Naive thymus-derived CD4-positive, alpha-beta T cell (primary cell): ENCODE measurements at regions of chr2 and their contacts with region 1.

Region 1: DNA sequence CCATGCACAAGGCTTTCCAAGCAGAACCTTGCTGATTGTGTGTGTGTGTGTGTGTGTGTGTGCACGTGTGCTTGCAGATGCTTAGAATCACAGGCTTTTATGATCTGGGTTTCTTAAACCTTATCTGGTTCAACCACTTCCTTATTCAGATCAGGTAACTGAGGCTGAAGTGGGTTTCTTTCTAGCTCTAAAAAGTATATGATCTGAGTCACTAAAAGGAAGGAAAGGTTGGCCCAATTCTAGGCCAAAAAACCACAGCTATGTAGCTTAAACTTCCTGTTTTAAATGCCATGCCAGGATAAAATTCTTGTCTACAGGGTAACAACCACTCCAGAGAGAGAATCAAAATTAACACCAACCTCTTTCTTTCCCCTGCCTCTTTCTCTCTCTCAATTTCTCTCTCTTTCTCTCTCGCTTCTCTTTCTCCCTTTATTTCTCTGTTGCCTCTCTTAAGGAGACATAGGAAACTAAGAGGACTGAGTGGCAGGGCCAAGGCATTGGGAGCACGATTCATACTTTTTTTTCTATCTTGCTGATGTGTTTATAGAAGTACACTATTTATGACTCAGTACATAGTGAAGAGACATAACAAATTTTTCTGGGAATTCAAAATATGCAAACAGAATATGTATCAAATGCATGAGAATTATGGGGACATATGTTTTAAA is 140.3 kb downstream of the TRIB2 start:
- DNase-seq: peak in 7 of 9 donors; percentile 46 to 81 (median 73)
- ATAC-seq: peak; percentile 91
- H3K4me3 ChIP-seq: peak overlapping the region; percentile 1
- H3K4me3 Mint-ChIP-seq: no peak overlapping the region
- H3K27ac ChIP-seq: no peak overlapping the region
- H3K27ac Mint-ChIP-seq: peak overlapping the region in 1 of 9 donors; percentile 2
- H3K4me1 ChIP-seq: peaks cover 40 to 56% of the 10 kb centered on the region in 2 donors
- H3K4me1 Mint-ChIP-seq: peaks cover 0 to 25% (median 14%) of the 10 kb centered on the region in 7 donors
- H3K27me3 ChIP-seq: no peaks in the 10 kb centered on the region
- H3K27me3 Mint-ChIP-seq: peaks cover 6 to 12% (median 10%) of the 10 kb centered on the region in 5 donors

Region 2: GRCh38 chr2:11829947-11830707 is 1026.9 kb before region 1 on chr2:
- CTCF ChIA-PET with region 1: no interaction called
- POLR2A ChIA-PET with region 1: no interaction called
- intact Hi-C with region 1: loop called in 1 of 2 experiments (anchors 2 kb)
- DNase-seq: peak in 8 of 9 donors; percentile 53 to 73 (median 63)
- ATAC-seq: peak; percentile 86
- H3K4me3 ChIP-seq: peak overlapping the region; percentile 60
- H3K4me3 Mint-ChIP-seq: peak overlapping the region; percentile 80 to 97 (median 84)
- H3K27ac ChIP-seq: peak overlapping the region; percentile 46
- H3K27ac Mint-ChIP-seq: peak overlapping the region; percentile 21 to 87 (median 78)
- H3K4me1 ChIP-seq: peaks cover 20% of the 10 kb centered on the region in 2 donors
- H3K4me1 Mint-ChIP-seq: peaks cover 18 to 44% (median 33%) of the 10 kb centered on the region in 7 donors
- H3K27me3 ChIP-seq: no peaks in the 10 kb centered on the region
- H3K27me3 Mint-ChIP-seq: peaks cover 0 to 50% (median 0%) of the 10 kb centered on the region in 5 donors

Region 3: GRCh38 chr2:12501469-12502158 is 355.5 kb before region 1 on chr2:
- CTCF ChIA-PET with region 1: no interaction called
- POLR2A ChIA-PET with region 1: no interaction called
- intact Hi-C with region 1: loop called (anchors 2 to 5 kb)
- DNase-seq: peak in 8 of 9 donors; percentile 39 to 74 (median 70)
- ATAC-seq: peak; percentile 86
- H3K4me3 ChIP-seq: peak overlapping the region; percentile 5
- H3K4me3 Mint-ChIP-seq: peak overlapping the region; percentile 64 to 83 (median 77)
- H3K27ac ChIP-seq: peak overlapping the region; percentile 69
- H3K27ac Mint-ChIP-seq: peak overlapping the region; percentile 87 to 96 (median 91)
- H3K4me1 ChIP-seq: peaks cover 89 to 98% of the 10 kb centered on the region in 2 donors
- H3K4me1 Mint-ChIP-seq: peaks cover 74 to 100% (median 98%) of the 10 kb centered on the region in 7 donors
- H3K27me3 ChIP-seq: no peaks in the 10 kb centered on the region
- H3K27me3 Mint-ChIP-seq: no peaks in the 10 kb centered on the region

Region 4: GRCh38 chr2:12702305-12703121 is 154.6 kb before region 1 on chr2:
- CTCF ChIA-PET with region 1: no interaction called
- POLR2A ChIA-PET with region 1: no interaction called
- intact Hi-C with region 1: no loop called
- DNase-seq: no peak
- ATAC-seq: no peak
- H3K4me3 ChIP-seq: no peak overlapping the region
- H3K4me3 Mint-ChIP-seq: peak overlapping the region in 5 of 10 donors; percentile 5 to 37 (median 23)
- H3K27ac ChIP-seq: no peak overlapping the region
- H3K27ac Mint-ChIP-seq: no peak overlapping the region
- H3K4me1 ChIP-seq: peaks cover 14 to 22% of the 10 kb centered on the region in 2 donors
- H3K4me1 Mint-ChIP-seq: peaks cover 15 to 56% (median 40%) of the 10 kb centered on the region in 7 donors
- H3K27me3 ChIP-seq: no peaks in the 10 kb centered on the region
- H3K27me3 Mint-ChIP-seq: peaks cover 0 to 44% (median 0%) of the 10 kb centered on the region in 5 donors

Region 5: GRCh38 chr2:12844966-12845365 is 12.1 kb before region 1 on chr2:
- CTCF ChIA-PET with region 1: no interaction called
- POLR2A ChIA-PET with region 1: no interaction called
- intact Hi-C with region 1: loop called in 1 of 2 experiments (anchors 1 kb)
- DNase-seq: no peak
- ATAC-seq: no peak
- H3K4me3 ChIP-seq: no peak overlapping the region
- H3K4me3 Mint-ChIP-seq: no peak overlapping the region
- H3K27ac ChIP-seq: no peak overlapping the region
- H3K27ac Mint-ChIP-seq: no peak overlapping the region
- H3K4me1 ChIP-seq: no peaks in the 10 kb centered on the region
- H3K4me1 Mint-ChIP-seq: peaks cover 0 to 3% (median 0%) of the 10 kb centered on the region in 7 donors
- H3K27me3 ChIP-seq: no peaks in the 10 kb centered on the region
- H3K27me3 Mint-ChIP-seq: peaks cover 0 to 66% (median 17%) of the 10 kb centered on the region in 5 donors

Region 6: GRCh38 chr2:12965540-12966269 is 108.6 kb after region 1 on chr2:
- CTCF ChIA-PET with region 1: no interaction called
- POLR2A ChIA-PET with region 1: no interaction called
- intact Hi-C with region 1: loop called in 1 of 2 experiments (anchors 1 kb)
- DNase-seq: peak in 5 of 9 donors; percentile 4 to 25 (median 9)
- ATAC-seq: peak; percentile 74
- H3K4me3 ChIP-seq: no peak overlapping the region
- H3K4me3 Mint-ChIP-seq: peak overlapping the region in 3 of 10 donors; percentile 29 to 63 (median 45)
- H3K27ac ChIP-seq: no peak overlapping the region
- H3K27ac Mint-ChIP-seq: peak overlapping the region in 2 of 9 donors; percentile 23 to 36
- H3K4me1 ChIP-seq: peaks cover 10 to 24% of the 10 kb centered on the region in 2 donors
- H3K4me1 Mint-ChIP-seq: peaks cover 8 to 42% (median 15%) of the 10 kb centered on the region in 7 donors
- H3K27me3 ChIP-seq: no peaks in the 10 kb centered on the region
- H3K27me3 Mint-ChIP-seq: peaks cover under 1 to 29% (median 10%) of the 10 kb centered on the region in 5 donors